MCF 10A (cell line): ENCODE measurements at regions of chr10 and their contacts with region 1.

Region 1: GRCh38 chr10:78424719-78425118 is 391.1 kb downstream of the RPS24 start:
- DNase-seq: peak; percentile 42
- H3K4me3 Mint-ChIP-seq: no peak overlapping the region
- H3K27ac Mint-ChIP-seq: no peak overlapping the region
- H3K4me1 Mint-ChIP-seq: no peaks in the 10 kb centered on the region
- H3K27me3 Mint-ChIP-seq: peaks cover 50% of the 10 kb centered on the region
- CTCF ChIP-seq: peak; percentile 49

Region 2: DNA sequence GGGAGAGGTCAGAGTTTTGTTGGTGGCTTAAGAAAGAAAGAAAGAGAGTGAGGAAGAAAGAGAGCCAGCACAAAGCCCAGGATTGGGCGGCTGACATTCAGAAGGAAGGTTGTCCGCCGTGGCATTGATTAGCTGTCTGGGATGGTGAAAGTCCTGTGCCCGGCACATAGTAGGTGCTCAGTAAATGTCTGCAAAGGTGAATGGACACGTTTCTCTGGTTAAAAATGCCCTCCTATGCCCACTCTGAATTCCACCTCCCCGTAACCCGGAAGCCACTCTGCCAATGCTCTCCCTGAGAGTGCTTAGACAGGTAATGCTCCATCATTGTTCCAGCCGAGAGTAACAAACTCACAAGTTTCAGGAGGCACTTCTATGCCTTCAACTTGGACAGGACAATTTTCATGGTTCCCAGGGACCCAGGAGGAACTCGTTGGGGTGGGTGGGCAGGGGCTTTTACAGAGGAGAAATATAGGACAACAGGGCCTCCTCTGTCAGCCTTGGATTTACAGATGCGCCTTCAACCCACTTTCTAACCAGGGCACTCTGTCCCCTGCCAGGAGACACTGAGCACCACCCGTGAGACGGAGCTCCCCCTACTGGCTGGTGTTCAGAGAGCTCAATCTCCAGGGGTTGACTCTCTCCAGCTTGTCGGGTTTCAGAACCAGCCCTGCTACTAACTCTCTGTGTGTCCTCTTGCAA is 232.6 kb after region 1 on chr10:
- CTCF ChIA-PET with region 1: no interaction called
- POLR2A ChIA-PET with region 1: no interaction called
- intact Hi-C with region 1: loop called (anchors 1 kb)
- DNase-seq: peak; percentile 76
- H3K4me3 Mint-ChIP-seq: no peak overlapping the region
- H3K27ac Mint-ChIP-seq: no peak overlapping the region
- H3K4me1 Mint-ChIP-seq: no peaks in the 10 kb centered on the region
- H3K27me3 Mint-ChIP-seq: peaks cover 41% of the 10 kb centered on the region
- CTCF ChIP-seq: peak; percentile 64